WTC11 (cell line): ENCODE measurements at regions of chr5 and their contacts with region 1.

Region 1: GRCh38 chr5:147576646-147577535 is 67.0 kb upstream of the DPYSL3 start:
- DNase-seq: peak; percentile 80
- ATAC-seq: peak; percentile 64
- H3K4me3 Mint-ChIP-seq: no peak overlapping the region
- H3K27ac Mint-ChIP-seq: no peak overlapping the region
- H3K4me1 Mint-ChIP-seq: peaks cover 67% of the 10 kb centered on the region
- H3K27me3 Mint-ChIP-seq: no peaks in the 10 kb centered on the region
- CTCF ChIP-seq: peak; percentile 88

Region 2: DNA sequence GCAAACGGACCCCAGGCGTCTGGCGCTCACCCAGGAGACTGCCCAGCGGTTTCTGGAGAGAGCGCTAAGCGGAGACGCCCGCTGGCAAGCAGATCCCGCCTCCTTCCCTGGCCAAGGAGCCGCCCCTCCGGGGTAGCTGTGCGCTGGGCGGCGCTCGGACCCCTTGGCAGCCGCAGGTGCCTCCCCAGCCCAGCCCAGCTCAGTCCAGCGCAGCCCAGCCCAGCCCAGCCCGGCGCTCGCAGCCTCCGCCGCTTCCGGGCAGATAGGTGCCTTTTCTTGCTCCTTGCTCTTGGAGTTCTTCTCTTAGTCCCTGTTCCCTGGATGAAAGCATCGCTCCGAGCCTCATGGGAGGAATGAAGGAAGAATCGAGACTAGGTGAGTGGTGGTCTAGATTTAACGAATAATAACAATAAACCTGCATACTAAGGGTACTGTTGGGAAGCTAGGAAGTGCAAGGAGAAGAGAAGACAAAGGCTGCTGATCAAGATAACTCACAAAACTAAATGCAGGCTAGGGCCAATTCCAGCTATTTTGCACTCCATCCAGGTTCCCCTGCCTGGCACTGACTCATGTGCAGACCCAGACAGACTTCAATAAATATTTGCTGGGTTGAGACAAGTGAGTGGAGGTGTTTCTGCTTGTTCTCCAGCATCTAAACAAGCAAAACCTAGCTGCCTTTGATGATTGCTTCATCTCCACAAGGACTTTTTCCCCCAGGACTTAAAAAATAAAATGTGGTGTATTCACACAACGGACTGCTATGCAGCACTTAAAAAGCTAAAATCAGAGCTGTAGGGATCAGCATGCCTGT is 341.9 kb before region 1 on chr5 and contains the start of gene STK32A:
- CTCF ChIA-PET with region 1: interaction called, 10 read pairs
- POLR2A ChIA-PET with region 1: no interaction called
- DNase-seq: peak; percentile 88
- ATAC-seq: peak; percentile 100
- H3K4me3 Mint-ChIP-seq: peak within 1 kb of the TSS; percentile 83
- H3K27ac Mint-ChIP-seq: peak within 1 kb of the TSS; percentile 97
- H3K4me1 Mint-ChIP-seq: peaks cover 6% of the 10 kb centered on the region
- H3K27me3 Mint-ChIP-seq: peaks cover 48% of the 10 kb centered on the region
- CTCF ChIP-seq: no peak
- total RNA-seq, gene STK32A: 1.7 to 3.0 TPM (median 3.0 TPM) in 3 replicates

Region 3: DNA sequence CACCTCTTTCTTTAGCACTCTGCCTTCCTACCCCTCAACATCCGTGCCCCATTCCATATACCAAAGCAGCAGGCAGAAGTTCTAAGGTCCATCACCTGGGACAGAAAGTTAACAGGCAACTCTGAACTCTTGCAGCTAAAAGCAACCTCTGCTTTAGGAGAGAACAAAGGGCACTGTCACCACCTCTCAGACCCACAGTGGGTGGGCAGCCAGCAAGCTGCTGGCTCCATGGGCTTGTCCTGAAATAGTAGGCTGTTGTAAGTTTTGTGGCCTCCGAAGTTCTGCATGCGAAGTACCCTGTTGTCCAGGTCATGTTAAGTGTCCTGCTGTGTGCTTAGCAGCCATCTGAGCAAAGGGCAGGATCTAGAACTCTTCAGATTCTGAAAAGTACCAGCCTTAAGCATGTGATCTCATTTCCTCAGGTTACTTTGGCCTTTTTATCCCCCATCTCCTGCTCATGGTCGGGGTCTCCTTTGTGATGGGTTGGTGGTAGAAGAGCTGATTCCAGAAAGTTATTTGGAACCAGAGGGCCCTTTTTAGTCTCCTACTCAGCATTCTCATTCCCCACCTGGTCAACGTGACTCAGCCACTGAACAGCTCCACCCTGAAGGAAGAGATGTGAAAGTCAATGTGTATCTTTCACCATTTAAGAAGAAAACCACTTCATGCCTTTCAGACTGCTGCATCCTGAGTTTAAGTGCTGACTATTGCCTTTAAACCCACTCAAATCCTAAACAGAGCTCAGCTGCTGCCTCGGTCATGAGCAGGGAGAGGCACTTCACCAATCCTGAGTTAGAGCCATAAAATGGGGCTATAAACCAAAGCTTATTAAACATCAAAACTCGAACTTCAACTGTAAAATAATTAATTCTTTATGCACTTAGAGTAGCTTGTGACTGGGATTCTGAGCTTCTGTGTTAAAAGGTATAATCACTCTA is 188.5 kb before region 1 on chr5:
- CTCF ChIA-PET with region 1: interaction called, 14 read pairs
- POLR2A ChIA-PET with region 1: no interaction called
- DNase-seq: no peak
- ATAC-seq: peak; percentile 56
- H3K4me3 Mint-ChIP-seq: no peak overlapping the region
- H3K27ac Mint-ChIP-seq: peak overlapping the region; percentile 3
- H3K4me1 Mint-ChIP-seq: peaks cover 38% of the 10 kb centered on the region
- H3K27me3 Mint-ChIP-seq: no peaks in the 10 kb centered on the region
- CTCF ChIP-seq: no peak

Region 4: DNA sequence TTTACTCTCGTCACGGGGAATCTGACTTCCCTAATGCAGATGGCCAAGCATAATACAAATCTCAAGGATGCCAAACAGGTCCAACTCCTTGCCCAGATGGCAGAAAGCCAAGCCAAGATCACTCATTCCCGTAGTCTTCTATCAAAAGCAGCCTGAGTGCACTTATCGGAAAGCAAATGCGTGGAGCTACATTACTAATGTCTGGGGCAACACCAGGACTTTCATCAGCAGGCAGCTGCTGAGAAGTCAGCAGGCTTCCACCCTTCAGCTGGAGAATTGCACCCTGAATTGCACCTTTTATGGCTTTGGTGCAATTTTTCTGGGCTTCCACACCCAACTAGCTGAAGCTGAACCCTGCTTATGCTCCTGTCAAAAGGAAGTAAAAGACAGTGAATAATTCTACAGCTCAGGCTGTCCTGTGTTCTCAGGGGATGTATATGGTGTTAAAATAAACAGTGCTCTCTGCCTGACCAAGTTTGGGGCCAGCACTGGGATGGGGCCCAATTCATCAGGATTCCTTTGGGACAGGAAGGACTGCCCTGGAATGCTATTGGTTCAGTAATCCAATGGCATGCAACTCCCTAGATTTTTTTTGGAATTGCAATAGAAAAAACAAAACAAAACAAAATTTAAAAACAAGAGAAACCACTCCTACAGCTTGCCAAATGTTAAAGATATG is 159.6 kb before region 1 on chr5:
- CTCF ChIA-PET with region 1: interaction called, 15 read pairs
- POLR2A ChIA-PET with region 1: interaction called, 3 read pairs
- DNase-seq: no peak
- ATAC-seq: no peak
- H3K4me3 Mint-ChIP-seq: no peak overlapping the region
- H3K27ac Mint-ChIP-seq: peak overlapping the region; percentile 62
- H3K4me1 Mint-ChIP-seq: peaks cover 17% of the 10 kb centered on the region
- H3K27me3 Mint-ChIP-seq: no peaks in the 10 kb centered on the region
- CTCF ChIP-seq: no peak

Region 5: DNA sequence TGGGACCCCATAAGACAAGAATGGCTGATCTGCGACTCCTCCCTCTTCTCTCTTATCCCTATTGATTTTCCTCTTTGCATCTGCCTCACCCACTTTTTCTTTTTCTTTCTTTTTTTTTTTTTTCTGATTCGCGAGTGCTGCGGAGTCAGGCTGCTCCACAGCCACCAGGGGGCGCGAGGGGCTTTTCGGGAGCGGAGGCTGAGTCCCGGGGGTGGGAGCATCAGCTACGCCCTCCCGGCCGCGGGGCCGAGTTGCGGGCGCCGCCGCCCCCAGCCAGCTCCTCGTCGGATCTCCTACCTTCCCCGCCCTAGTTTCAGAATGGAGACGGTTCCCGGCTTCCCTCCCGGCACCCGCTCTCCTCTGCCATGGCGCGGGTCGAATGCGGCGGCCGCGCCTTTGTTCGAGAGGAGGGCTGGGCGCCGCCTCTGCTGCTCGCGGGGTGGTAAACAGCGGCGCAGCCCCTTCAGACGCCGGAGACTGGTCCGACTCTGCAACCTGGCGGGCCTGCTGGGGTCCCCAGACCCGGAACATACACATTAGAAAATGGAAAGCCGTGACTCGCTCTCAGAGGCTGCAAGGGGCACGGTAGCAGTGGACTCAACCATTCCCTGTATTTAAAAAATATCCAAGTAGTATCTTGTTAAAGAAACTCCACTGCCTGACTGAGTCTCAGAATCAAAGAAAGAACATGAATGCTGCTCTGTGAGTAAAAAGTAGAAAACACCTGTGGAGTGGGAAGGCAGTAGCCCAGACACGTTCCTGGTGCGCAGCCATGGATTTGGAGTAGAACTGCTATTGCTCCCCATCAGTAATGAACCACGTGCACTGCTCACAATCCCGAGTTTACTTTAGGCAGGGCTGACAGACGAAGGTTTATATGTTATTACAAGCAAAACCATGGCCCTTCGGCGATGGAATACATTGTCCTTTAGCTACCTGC is 122.7 kb before region 1 on chr5:
- CTCF ChIA-PET with region 1: interaction called, 41 read pairs
- POLR2A ChIA-PET with region 1: interaction called, 13 read pairs
- DNase-seq: peak; percentile 94
- ATAC-seq: peak; percentile 62
- H3K4me3 Mint-ChIP-seq: peak overlapping the region; percentile 96
- H3K27ac Mint-ChIP-seq: peak overlapping the region; percentile 95
- H3K4me1 Mint-ChIP-seq: peaks cover 72% of the 10 kb centered on the region
- H3K27me3 Mint-ChIP-seq: no peaks in the 10 kb centered on the region; the same call in 1 of the 2 replicates
- CTCF ChIP-seq: peak; percentile 92

Region 6: GRCh38 chr5:147483961-147484707 is 92.8 kb before region 1 on chr5:
- CTCF ChIA-PET with region 1: interaction called, 13 read pairs
- POLR2A ChIA-PET with region 1: no interaction called
- DNase-seq: no peak
- ATAC-seq: no peak
- H3K4me3 Mint-ChIP-seq: no peak overlapping the region
- H3K27ac Mint-ChIP-seq: peak overlapping the region; percentile 91
- H3K4me1 Mint-ChIP-seq: peaks cover 72% of the 10 kb centered on the region
- H3K27me3 Mint-ChIP-seq: no peaks in the 10 kb centered on the region
- CTCF ChIP-seq: no peak

Region 7: GRCh38 chr5:147558826-147559225 is 18.1 kb before region 1 on chr5:
- CTCF ChIA-PET with region 1: interaction called, 121 read pairs
- POLR2A ChIA-PET with region 1: interaction called, 5 read pairs
- DNase-seq: peak; percentile 61
- ATAC-seq: peak; percentile 57
- H3K4me3 Mint-ChIP-seq: no peak overlapping the region
- H3K27ac Mint-ChIP-seq: 0 out of 2 replicates have a peak overlapping the region, but pooled peaks have one; percentile 30
- H3K4me1 Mint-ChIP-seq: peaks cover 68% of the 10 kb centered on the region
- H3K27me3 Mint-ChIP-seq: no peaks in the 10 kb centered on the region
- CTCF ChIP-seq: peak; percentile 63

Region 8: DNA sequence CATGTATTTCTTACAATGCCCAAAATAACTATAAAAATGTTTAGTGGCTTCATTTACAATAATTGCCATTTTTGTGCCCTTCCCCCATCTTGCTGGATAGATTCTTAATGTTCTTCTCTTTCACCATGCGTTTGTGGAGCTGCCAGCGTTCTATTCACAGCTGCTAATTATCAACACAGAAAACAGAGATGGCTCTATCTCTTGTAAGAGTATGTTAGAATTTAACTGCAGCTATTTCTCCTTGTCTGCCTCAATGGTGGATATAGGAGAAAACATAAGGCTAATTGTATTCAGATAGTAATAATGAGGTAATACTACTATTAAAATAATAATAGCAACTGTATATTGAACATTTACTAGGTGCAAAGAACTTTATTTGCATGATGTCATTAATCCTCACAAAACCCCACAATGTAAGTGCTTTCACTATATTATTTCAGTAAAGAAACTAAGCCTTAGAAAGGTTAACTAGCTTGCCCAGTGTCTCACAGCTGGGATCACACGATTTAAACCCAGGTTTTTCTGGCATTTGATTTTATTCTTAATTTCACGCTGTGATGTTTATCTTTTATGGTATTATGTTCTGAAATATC is 155.5 kb after region 1 on chr5:
- CTCF ChIA-PET with region 1: no interaction called
- POLR2A ChIA-PET with region 1: no interaction called
- DNase-seq: no peak
- ATAC-seq: no peak
- H3K4me3 Mint-ChIP-seq: no peak overlapping the region
- H3K27ac Mint-ChIP-seq: peak overlapping the region; percentile 3; the same call in 1 of the 2 replicates
- H3K4me1 Mint-ChIP-seq: peaks cover 41% of the 10 kb centered on the region
- H3K27me3 Mint-ChIP-seq: no peaks in the 10 kb centered on the region
- CTCF ChIP-seq: no peak